GM13976 (cell line): ENCODE measurements at regions of chr19 and their contacts with region 1.

Region 1: DNA sequence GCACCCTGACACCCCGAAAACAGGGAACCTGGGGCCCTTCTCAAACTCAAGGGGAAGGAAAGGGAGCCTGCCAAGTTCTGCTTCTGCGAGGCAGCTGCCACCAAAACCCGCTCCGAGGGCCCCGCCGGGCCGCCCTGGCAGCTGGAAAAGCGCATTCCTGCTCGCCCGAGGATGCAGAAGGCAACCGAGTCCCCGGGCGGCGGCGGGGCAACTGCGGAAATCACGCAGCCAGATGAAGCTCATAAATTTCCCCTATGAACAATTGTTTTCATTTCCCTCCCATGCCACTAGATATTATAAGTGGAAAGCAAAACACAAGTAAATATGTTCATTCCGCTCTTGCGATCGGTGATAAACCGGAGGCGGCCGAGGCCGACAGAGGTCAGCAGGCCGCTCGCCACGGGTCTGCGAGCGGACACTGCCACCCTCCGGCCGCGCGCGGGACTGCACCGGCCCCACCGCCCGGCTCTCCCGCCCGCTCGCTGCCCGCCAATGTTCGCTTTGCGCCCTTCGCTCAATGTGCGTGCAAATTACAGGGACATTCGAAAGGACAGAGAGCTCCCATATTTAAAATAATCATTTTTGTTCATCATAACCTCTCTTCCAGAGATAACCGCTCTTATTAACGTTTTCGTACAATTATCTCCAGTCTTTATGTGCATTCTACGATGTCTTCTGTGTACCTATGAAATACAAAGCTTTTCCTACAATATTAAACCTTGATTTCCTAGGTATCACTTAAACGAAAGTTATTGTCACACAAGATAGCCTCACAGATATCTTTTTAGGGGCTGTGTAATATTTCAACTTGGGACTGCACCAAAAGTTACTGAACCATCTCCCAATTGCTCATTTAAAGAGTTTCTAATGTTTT is 120.8 kb upstream of the ZNF507 start:
- DNase-seq: peak; percentile 89
- CTCF ChIP-seq: peak; percentile 98

Region 2: GRCh38 chr19:30682999-30683536 is 1541.5 kb before region 1 on chr19:
- in situ Hi-C with region 1: loop called (anchors 10 kb)
- DNase-seq: peak; percentile 81
- CTCF ChIP-seq: peak; percentile 81

Region 3: DNA sequence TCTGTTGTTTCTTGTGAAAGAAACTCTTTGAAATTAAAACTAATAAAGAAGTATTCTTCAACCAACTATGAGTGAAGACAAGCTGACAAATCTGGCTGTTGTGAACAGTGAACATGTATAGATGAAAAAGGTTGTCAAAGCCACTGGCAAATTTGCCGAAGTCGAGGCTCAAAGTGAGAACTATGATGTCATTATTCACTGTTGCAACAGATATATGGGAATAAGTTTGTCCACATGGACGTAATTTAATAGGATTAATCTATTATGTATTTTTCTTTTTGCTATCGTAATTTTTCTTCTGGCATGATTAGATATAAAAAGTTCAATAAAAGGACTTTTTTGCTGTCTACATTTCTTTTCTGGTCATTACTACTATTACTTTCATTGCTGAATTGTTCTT is 102.4 kb before region 1 on chr19:
- in situ Hi-C with region 1: no loop called
- DNase-seq: no peak
- CTCF ChIP-seq: no peak

Region 4: GRCh38 chr19:32181216-32181920 is 43.2 kb before region 1 on chr19:
- in situ Hi-C with region 1: no loop called
- DNase-seq: no peak
- CTCF ChIP-seq: no peak

Region 5: DNA sequence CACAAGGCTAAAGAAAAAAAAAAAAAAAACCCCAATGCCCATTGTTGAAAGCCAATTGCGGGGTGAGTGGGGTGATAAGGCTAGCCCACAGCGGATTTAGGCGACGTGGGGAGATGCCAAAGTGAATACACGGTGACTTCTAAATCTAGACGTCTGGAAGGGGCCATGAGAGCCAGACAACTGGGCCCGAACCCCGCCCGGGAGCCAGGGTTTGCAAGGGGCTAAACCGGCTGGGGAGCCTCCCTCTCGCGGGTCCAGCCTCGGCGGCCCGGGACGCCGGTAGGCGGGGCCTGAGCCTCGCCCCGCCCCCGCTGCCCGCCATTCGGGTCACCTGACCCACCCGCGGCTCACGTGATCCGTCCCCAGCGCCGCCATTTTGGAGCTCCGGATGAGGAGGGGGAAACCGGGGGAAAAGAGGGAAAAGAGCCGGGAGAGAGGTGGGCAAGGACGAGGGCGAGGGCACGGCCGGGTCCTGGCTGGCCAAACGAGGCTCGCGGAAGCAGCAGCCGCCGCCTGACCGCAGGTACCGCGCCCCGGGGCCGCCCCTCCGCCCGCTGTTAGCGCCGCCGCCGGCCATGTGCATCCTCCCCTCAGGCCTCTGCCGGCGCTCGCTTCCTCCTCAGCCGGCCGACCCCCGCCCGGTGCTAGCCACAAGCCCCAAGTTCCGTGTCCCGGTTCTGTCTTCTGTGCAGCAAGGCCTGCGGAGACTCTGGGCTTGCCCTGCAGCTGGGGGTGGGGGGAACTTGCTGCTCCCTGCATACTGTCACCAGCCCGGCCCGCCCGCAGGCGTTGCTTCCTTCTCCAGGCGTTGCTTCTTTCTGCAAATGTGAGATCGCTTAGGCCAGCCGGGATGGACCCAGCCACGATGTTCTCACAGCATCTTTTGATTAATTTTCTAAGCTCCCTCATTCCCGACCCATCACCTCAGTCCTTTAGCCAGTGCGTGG is 120.9 kb after region 1 on chr19 and contains the start of gene ZNF507:
- in situ Hi-C with region 1: no loop called
- DNase-seq: peak; percentile 98
- CTCF ChIP-seq: peak; percentile 9